Activated B cell treated with CpG ODN at 0.5 μM for 24 hours (primary cell): ENCODE measurements at regions of chr1 and their contacts with region 1.

Region 1: GRCh38 chr1:21963477-21964217 is 13.2 kb upstream of the CELA3B start:
- DNase-seq: peak; percentile 73
- ATAC-seq: peak; percentile 92
- H3K4me3 Mint-ChIP-seq: no peak overlapping the region
- H3K27ac Mint-ChIP-seq: no peak overlapping the region
- H3K4me1 Mint-ChIP-seq: peaks cover 2% of the 10 kb centered on the region
- H3K27me3 Mint-ChIP-seq: peaks cover 8% of the 10 kb centered on the region
- CTCF ChIP-seq: no peak

Region 2: GRCh38 chr1:21659099-21659923 is 304.3 kb before region 1 on chr1:
- CTCF ChIA-PET with region 1: no interaction called
- POLR2A ChIA-PET with region 1: no interaction called
- intact Hi-C with region 1: loop called (anchors 2 kb)
- DNase-seq: peak; percentile 77
- ATAC-seq: peak; percentile 97
- H3K4me3 Mint-ChIP-seq: peak overlapping the region; percentile 32
- H3K27ac Mint-ChIP-seq: no peak overlapping the region
- H3K4me1 Mint-ChIP-seq: peaks cover 11% of the 10 kb centered on the region
- H3K27me3 Mint-ChIP-seq: peaks cover 25% of the 10 kb centered on the region
- CTCF ChIP-seq: no peak

Region 3: GRCh38 chr1:21703318-21703963 is 260.2 kb before region 1 on chr1:
- CTCF ChIA-PET with region 1: no interaction called
- POLR2A ChIA-PET with region 1: no interaction called
- intact Hi-C with region 1: loop called (anchors 1 kb)
- DNase-seq: no peak
- ATAC-seq: no peak
- H3K4me3 Mint-ChIP-seq: no peak overlapping the region
- H3K27ac Mint-ChIP-seq: no peak overlapping the region
- H3K4me1 Mint-ChIP-seq: peaks cover 11% of the 10 kb centered on the region
- H3K27me3 Mint-ChIP-seq: no peaks in the 10 kb centered on the region
- CTCF ChIP-seq: no peak

Region 4: GRCh38 chr1:21742578-21742977 is 221.1 kb before region 1 on chr1:
- CTCF ChIA-PET with region 1: no interaction called
- POLR2A ChIA-PET with region 1: no interaction called
- intact Hi-C with region 1: loop called (anchors 2 kb)
- DNase-seq: no peak
- ATAC-seq: no peak
- H3K4me3 Mint-ChIP-seq: no peak overlapping the region
- H3K27ac Mint-ChIP-seq: no peak overlapping the region
- H3K4me1 Mint-ChIP-seq: no peaks in the 10 kb centered on the region
- H3K27me3 Mint-ChIP-seq: no peaks in the 10 kb centered on the region
- CTCF ChIP-seq: no peak

Region 5: DNA sequence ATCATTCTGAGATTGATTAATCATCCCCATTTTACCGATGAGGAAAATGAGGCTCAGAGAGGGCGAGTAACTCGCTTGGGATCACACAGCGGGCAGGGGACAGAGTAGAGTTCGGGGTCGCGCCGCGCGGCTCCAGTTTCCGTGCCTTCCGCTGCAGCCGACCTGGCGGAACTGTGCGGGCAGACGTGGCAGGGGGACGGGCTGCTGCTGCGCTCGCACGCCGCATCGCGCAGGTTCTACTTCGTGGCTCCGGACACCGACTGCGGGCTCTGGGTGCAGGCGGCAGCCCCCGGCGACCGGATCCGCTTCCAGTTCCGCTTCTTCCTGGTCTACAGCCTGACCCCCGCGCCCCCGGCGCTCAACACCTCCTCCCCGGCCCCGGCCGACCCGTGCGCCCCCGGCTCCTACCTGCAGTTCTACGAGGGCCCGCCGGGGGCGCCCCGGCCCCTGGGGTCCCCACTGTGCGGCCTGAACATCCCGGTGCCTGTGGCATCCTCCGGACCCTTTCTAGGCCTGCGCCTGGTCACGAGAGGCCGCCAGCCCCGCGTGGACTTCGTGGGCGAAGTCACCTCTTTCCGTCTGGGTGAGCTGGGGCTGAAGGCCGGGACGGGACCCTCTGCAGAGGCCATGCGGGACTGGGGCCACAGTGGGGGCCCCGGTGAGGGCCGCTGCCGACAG is 149.3 kb before region 1 on chr1:
- CTCF ChIA-PET with region 1: no interaction called
- POLR2A ChIA-PET with region 1: no interaction called
- intact Hi-C with region 1: loop called (anchors 5 kb)
- DNase-seq: peak; percentile 53
- ATAC-seq: peak; percentile 78
- H3K4me3 Mint-ChIP-seq: peak overlapping the region; percentile 36
- H3K27ac Mint-ChIP-seq: no peak overlapping the region
- H3K4me1 Mint-ChIP-seq: peaks cover 20% of the 10 kb centered on the region
- H3K27me3 Mint-ChIP-seq: peaks cover 3% of the 10 kb centered on the region
- CTCF ChIP-seq: peak; percentile 18

Region 6: GRCh38 chr1:21946836-21947587 is 16.6 kb before region 1 on chr1:
- CTCF ChIA-PET with region 1: no interaction called
- POLR2A ChIA-PET with region 1: no interaction called
- intact Hi-C with region 1: no loop called
- DNase-seq: no peak
- ATAC-seq: no peak
- H3K4me3 Mint-ChIP-seq: no peak overlapping the region
- H3K27ac Mint-ChIP-seq: no peak overlapping the region
- H3K4me1 Mint-ChIP-seq: no peaks in the 10 kb centered on the region
- H3K27me3 Mint-ChIP-seq: no peaks in the 10 kb centered on the region
- CTCF ChIP-seq: no peak

Region 7: GRCh38 chr1:22074803-22075202 is 111.2 kb after region 1 on chr1:
- CTCF ChIA-PET with region 1: no interaction called
- POLR2A ChIA-PET with region 1: no interaction called
- intact Hi-C with region 1: no loop called
- DNase-seq: no peak
- ATAC-seq: no peak
- H3K4me3 Mint-ChIP-seq: peak overlapping the region; percentile 50
- H3K27ac Mint-ChIP-seq: peak overlapping the region; percentile 65
- H3K4me1 Mint-ChIP-seq: peaks cover 84% of the 10 kb centered on the region
- H3K27me3 Mint-ChIP-seq: no peaks in the 10 kb centered on the region
- CTCF ChIP-seq: no peak